HAP-1 (cell line): ENCODE measurements at regions of chr3 and their contacts with region 1.

Region 1: DNA sequence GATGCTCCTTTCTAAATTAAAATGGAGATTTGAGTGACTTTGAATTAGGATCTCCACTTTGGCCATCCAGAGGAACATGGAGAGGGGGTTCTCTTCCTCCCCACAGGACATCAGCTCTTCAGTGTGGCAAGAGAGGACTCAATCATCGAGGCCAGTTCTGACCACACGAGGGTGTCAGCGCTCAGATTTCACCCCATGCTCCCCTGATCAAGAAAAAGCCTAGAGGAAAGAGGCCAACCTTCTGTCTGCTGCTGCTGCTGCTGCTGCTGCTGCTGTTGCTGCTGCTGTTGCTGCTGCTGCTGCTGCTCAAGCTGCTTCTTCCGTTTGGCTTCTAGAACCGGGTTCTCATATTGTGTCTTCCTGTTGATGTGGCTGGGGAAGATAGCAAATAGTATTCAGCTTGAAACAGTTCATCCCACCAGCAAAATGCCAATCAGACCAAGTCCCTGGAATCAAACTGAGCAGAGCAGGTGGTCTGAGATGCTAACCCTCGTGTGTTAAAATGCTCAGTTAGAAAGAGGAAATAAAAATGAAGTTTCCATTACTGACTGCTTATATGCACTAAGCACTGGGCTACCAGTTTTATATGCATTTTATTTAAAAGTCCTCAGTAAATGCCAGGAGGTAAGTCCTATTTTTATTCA is 599.0 kb downstream of the MAGI1 start:
- DNase-seq: peak; percentile 57 to 73
- H3K4me3 ChIP-seq: no peak overlapping the region
- H3K4me1 ChIP-seq: peaks cover 14% of the 10 kb centered on the region
- H3K27me3 ChIP-seq: 0 out of 2 replicates have a peak, but pooled peaks cover 1% of the 10 kb centered on the region

Region 2: DNA sequence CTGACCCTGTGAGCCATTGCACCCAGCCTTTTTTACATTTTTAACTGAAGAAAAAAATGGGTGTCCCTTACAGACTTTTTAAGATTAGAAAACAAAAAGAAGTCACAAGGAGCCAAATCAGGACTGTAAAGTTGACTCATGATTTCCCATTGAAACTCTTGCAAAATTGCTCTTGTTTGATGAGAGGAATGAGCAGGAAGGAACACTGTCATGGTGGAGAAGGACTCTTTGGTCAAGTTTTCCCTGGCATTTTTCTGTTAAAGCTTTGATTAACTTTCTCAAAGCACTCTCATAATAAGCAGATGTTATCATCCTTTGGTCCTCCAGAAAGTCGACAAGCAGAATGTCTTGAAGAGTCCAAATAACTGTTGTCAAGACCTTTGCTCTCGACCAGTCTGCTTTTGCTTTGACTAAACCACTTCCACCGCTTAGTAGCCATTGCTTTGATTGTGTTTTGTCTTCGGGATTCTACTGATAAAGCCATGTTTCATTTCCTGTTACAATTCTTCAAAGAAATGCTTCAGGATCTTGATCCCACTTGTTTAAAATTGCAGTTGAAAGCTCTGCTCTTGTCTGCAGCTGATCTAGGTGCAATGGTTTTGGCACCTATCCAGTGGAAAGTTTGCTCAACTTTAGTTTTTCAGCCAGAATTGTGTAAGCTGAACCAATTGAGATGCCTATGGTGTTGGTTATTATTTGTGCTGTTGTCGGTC is 229.6 kb after region 1 on chr3:
- in situ Hi-C with region 1: loop called (anchors 10 kb)
- DNase-seq: no peak
- H3K4me3 ChIP-seq: no peak overlapping the region
- H3K4me1 ChIP-seq: peaks cover 48% of the 10 kb centered on the region
- H3K27me3 ChIP-seq: no peaks in the 10 kb centered on the region

Region 3: DNA sequence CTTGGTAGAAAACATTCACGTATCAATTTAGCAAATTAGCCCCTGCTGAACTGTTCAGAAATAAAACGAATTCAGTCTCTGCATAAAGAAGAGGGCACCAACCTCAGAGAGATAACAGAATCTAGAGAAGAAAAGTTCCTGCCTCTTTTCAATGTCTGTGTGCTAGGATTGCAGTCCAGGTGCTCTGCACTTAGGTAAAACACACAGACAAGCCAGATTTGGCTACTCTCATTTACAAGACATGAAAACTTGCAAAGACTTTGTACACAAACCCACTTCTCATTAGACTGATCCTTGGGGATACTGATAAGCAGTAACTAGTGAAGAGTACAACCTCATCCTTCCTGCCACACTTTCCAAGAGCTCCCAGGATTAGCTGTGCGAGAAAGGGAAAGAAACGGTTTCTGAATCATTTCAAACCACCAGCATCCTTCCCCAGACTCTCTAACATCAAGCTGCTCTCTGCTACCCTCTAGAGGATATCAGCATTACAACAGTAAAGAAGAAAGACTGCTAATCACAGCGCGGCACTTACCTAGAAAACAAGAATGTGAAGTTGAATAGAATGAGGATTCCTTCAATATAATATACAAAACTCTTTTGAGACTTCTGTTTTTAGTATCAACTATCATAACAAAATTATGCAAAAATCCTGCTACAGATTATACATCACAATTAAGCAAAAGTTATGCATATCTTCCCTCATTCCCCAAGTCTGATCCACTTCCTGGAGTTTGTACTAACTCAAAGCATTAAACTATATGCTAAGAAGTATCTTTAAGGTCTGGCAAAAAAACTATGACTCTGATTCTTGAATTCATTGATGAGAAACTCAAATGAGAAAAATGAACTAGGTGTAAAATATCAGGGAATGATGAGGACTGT is 292.5 kb after region 1 on chr3:
- in situ Hi-C with region 1: loop called (anchors 10 kb)
- DNase-seq: peak; percentile 37 to 64
- H3K4me3 ChIP-seq: no peak overlapping the region
- H3K4me1 ChIP-seq: no peaks in the 10 kb centered on the region
- H3K27me3 ChIP-seq: peaks cover 3% of the 10 kb centered on the region; the same call in 1 of the 2 replicates